GM23248 (cell line): ENCODE measurements at regions of chr17 and their contacts with region 1.

Region 1: GRCh38 chr17:32495359-32496231 is 8.8 kb downstream of the CDK5R1 start:
- DNase-seq: peak; percentile 64
- H3K4me3 ChIP-seq: no peak overlapping the region
- H3K27ac ChIP-seq: 0 out of 2 replicates have a peak overlapping the region, but pooled peaks have one; percentile 69
- H3K4me1 ChIP-seq: peaks cover 22% of the 10 kb centered on the region
- H3K27me3 ChIP-seq: no peaks in the 10 kb centered on the region

Region 2: DNA sequence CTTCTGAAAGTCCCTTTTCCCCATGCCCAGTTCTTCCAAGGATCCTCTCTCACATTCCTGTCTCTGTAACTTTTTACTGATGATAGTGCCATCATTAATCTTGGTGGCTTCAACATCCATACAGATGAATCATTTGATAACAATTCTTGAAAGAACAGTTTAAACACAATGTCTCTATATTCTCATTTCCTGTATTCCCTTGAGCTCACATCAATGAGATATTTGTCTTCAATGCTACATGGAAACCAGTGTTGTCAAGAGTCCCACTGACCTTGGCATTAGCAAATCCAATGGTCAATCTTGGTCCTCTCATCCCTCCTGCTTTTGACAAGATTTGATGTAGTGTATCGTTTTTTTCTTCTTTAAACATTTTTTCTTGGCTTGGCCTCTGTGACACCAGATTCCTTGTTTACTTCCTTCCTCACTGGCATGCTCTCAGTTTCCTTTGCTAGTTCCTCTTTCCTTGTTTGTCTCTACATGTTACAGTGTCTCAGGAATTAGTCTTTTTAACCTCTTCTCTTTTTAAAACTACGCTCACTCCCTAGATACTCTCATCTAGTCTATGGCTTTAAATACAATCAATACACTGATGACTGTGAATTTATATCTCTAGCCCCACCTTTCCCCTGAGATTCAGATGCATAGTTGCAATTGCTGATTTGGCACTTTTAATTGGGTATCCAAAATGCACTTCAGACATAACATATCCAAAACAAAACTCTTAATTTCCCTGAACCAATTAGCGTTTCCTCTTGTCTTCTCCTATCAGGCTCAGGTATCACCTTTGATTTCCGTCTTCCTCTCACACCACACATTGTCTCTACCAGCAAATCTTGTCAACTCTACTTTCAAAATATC is 247.3 kb after region 1 on chr17:
- in situ Hi-C with region 1: loop called (anchors 10 kb)
- DNase-seq: no peak
- H3K4me3 ChIP-seq: no peak overlapping the region
- H3K27ac ChIP-seq: peak overlapping the region; percentile 47; the same call in 1 of the 2 replicates
- H3K4me1 ChIP-seq: peaks cover 46% of the 10 kb centered on the region
- H3K27me3 ChIP-seq: no peaks in the 10 kb centered on the region